A673 (cell line): ENCODE measurements at regions of chr18 and their contacts with region 1.

Region 1: GRCh38 chr18:22813648-22814328 is 119.3 kb upstream of the RBBP8 start:
- DNase-seq: peak; percentile 73
- H3K4me3 ChIP-seq: no peak overlapping the region
- H3K27ac ChIP-seq: no peak overlapping the region
- H3K4me1 ChIP-seq: peaks cover 5% of the 10 kb centered on the region
- H3K27me3 ChIP-seq: no peaks in the 10 kb centered on the region
- CTCF ChIP-seq: peak; percentile 85

Region 2: DNA sequence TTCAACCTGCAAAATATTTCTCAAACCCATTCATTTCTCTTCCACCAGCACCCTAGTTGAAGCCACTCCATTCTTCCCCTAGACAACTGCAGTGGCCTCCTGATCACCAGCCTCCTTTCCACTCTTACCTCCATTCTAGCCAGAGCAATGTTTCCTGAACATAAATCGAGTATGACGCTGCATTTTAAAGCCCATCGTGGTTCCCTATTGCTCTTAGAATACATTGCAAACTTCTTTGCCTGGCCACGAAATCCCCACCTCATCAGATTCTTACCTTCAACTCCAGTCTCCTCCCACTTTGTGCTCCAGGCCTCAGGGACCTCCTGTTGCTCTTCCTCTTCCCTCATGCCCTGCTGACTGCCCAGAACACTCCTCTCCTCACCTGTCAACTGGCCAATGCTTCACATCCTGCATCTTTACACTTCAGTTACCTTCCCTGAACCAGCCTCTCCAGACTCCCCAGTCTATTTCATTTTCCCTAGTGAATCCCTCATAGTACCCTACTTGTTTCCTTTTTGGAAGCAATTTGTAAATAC is 219.6 kb before region 1 on chr18:
- CTCF ChIA-PET with region 1: no interaction called
- POLR2A ChIA-PET with region 1: no interaction called
- intact Hi-C with region 1: no loop called
- DNase-seq: no peak
- H3K4me3 ChIP-seq: no peak overlapping the region
- H3K27ac ChIP-seq: no peak overlapping the region
- H3K4me1 ChIP-seq: no peaks in the 10 kb centered on the region
- H3K27me3 ChIP-seq: peaks cover 47% of the 10 kb centered on the region
- CTCF ChIP-seq: no peak

Region 3: GRCh38 chr18:22983175-22983574 is 169.4 kb after region 1 on chr18:
- CTCF ChIA-PET with region 1: interaction called, 17 read pairs
- POLR2A ChIA-PET with region 1: no interaction called
- intact Hi-C with region 1: loop called (anchors 2 kb)
- DNase-seq: peak; percentile 52
- H3K4me3 ChIP-seq: no peak overlapping the region
- H3K27ac ChIP-seq: no peak overlapping the region
- H3K4me1 ChIP-seq: peaks cover 6% of the 10 kb centered on the region
- H3K27me3 ChIP-seq: no peaks in the 10 kb centered on the region
- CTCF ChIP-seq: peak; percentile 63

Region 4: DNA sequence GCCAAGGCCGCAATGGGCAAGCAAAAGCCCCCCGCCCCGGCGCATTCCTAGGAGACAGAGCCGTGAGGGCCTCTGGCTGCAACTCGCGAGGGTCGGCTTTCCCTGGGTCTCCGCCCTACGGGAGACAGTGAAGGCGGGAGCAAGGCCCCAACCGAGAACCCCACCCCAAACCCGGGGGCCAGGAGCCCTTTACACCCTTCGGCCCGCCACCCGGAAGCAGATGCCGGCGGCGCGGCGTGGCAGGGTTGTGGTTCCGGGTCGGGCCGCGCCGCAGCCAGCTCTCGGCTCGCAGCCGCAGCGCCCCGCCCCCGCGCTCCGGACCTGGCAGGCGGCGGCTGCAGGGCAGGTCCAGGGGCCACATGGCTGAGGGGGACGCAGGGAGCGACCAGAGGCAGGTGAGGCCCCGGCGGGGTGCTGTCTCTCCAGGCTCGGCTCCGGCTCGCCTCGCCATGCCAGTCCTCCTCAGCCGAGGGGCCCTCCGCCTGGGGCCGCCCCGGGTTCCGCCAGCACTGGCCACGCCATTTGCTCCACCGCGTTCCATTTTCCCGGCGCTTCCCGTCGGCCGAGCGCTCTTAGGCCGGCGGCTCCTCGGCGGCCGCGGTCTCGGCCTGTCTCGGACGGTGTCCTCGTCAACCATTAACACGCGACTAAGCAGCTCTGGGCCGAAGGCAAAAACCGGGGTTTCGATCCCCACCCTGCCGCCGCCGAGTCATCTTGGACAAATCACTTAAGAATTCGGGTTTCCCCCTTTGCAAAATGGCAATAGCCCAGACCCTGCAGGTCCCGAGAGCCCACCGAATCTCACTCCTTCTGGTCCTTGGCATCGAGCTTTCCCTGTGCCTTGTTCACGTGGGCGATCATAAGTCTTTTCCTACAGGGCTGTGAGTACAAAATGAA is 1612.9 kb after region 1 on chr18 and contains the start of gene IMPACT:
- CTCF ChIA-PET with region 1: no interaction called
- POLR2A ChIA-PET with region 1: no interaction called
- intact Hi-C with region 1: no loop called
- DNase-seq: peak; percentile 87
- H3K4me3 ChIP-seq: peak within 1 kb of the TSS; percentile 83
- H3K27ac ChIP-seq: peak within 1 kb of the TSS; percentile 85
- H3K4me1 ChIP-seq: peaks cover 9% of the 10 kb centered on the region
- H3K27me3 ChIP-seq: peaks cover 16% of the 10 kb centered on the region
- CTCF ChIP-seq: no peak
- total RNA-seq, gene IMPACT: 35.6 and 46.0 TPM in 2 replicates